ENCODE measurements at regions of chr2 and their contacts with region 1.

Region 1: DNA sequence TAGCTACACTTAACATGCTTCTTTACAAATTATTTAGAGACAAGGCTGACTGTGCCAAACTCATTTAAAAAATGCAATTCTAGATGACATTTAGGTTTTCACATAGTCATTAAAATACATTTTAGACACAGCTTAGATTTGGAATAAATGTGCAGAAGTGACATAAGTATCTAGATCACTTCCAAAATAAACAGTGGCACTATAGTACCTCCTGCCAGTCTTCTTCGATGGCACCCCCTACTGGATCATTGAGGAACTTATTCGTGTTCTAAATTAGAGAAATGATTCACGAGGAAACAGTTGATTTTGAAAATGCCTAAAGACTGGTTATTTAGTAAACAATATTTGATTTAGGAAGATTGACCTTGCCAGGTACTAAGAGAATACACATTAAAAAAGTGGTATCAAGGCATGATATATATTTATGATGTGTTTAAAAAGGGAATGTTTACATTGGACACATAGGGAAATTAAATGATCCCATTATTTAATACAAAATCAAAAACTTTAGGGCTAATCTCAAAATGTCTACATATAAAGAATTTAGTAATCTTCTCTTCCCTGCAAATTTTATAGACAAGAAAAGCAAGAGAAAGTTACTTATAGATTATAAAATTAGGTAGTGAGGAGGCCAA is 323.9 kb downstream of the XIRP2 start:
- DNase-seq: peak; percentile 51
- H3K4me3 ChIP-seq: no peak overlapping the region; a peak in 1 of 4 replicates
- H3K27ac ChIP-seq: no peak overlapping the region
- H3K4me1 ChIP-seq: no peaks in the 10 kb centered on the region
- H3K27me3 ChIP-seq: no peaks in the 10 kb centered on the region
- CTCF ChIP-seq: peak; percentile 90
- EP300 ChIP-seq: no peak
- RAD21 ChIP-seq: peak; percentile 86

Region 2: DNA sequence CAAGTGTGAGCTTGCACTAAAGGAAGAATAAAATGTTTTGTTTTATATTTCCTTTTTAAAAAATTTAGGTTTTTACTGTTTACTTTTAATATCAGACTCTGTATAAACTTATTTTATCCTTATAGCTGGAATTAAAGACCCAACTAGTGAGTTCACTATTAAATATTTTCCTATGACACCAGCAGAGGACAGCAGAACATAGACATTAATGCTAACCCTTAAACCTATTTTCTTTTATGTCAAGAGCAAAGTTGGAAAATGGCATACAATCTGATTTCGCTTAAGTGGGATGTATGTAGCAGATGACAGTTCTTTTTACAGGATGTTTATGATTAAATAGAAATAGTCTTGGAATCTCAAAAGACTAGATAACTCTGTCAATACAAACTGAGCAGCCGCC is 512.1 kb before region 1 on chr2:
- CTCF ChIA-PET with region 1: interaction called, 22 read pairs
- POLR2A ChIA-PET with region 1: no interaction called
- DNase-seq: peak; percentile 11
- H3K4me3 ChIP-seq: no peak overlapping the region
- H3K27ac ChIP-seq: no peak overlapping the region
- H3K4me1 ChIP-seq: no peaks in the 10 kb centered on the region
- H3K27me3 ChIP-seq: no peaks in the 10 kb centered on the region
- CTCF ChIP-seq: peak; percentile 55
- EP300 ChIP-seq: no peak
- RAD21 ChIP-seq: peak; percentile 79

Region 3: GRCh38 chr2:166900700-166901099 is 311.4 kb before region 1 on chr2:
- CTCF ChIA-PET with region 1: no interaction called
- POLR2A ChIA-PET with region 1: no interaction called
- DNase-seq: no peak
- H3K4me3 ChIP-seq: no peak overlapping the region
- H3K27ac ChIP-seq: no peak overlapping the region
- H3K4me1 ChIP-seq: no peaks in the 10 kb centered on the region
- H3K27me3 ChIP-seq: no peaks in the 10 kb centered on the region
- CTCF ChIP-seq: peak; percentile 23
- EP300 ChIP-seq: no peak
- RAD21 ChIP-seq: no peak

Region 4: GRCh38 chr2:167196461-167197252 is 15.5 kb before region 1 on chr2:
- CTCF ChIA-PET with region 1: interaction called, 24 read pairs
- POLR2A ChIA-PET with region 1: no interaction called
- DNase-seq: peak; percentile 55
- H3K4me3 ChIP-seq: no peak overlapping the region
- H3K27ac ChIP-seq: peak overlapping the region in 1 of 2 experiments; percentile 25; a peak in 1 of 4 replicates
- H3K4me1 ChIP-seq: peaks cover 8% of the 10 kb centered on the region in 2 experiments; a peak in 2 of 4 replicates
- H3K27me3 ChIP-seq: no peaks in the 10 kb centered on the region
- CTCF ChIP-seq: no peak
- EP300 ChIP-seq: no peak
- RAD21 ChIP-seq: no peak

Region 5: DNA sequence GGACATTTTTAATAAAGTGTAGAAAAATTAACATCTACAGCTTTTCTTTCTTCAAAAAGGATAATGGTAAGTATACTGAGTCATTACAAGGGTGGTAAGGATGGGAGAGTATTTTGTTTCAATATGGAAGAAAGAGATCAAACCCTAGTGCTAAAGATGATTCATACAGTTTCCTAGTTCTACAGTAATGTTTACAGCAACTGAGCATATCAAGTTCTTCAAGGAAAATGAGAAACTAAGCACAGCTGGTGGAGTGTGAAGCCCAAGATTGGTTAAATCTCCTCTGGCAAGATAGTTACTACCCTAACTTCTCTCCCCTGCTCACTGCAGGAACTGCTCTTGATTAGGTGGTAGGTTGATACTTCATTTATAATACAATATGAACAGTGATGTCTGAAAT is 143.7 kb after region 1 on chr2:
- CTCF ChIA-PET with region 1: no interaction called
- POLR2A ChIA-PET with region 1: no interaction called
- DNase-seq: no peak
- H3K4me3 ChIP-seq: no peak overlapping the region
- H3K27ac ChIP-seq: no peak overlapping the region
- H3K4me1 ChIP-seq: no peaks in the 10 kb centered on the region
- H3K27me3 ChIP-seq: no peaks in the 10 kb centered on the region
- CTCF ChIP-seq: no peak
- EP300 ChIP-seq: no peak
- RAD21 ChIP-seq: no peak

Region 6: GRCh38 chr2:167509586-167509985 is 297.5 kb after region 1 on chr2:
- CTCF ChIA-PET with region 1: no interaction called
- POLR2A ChIA-PET with region 1: no interaction called
- DNase-seq: no peak
- H3K4me3 ChIP-seq: 0 out of 4 replicates have a peak overlapping the region, but pooled peaks of 1 of the 2 experiments have one; percentile 17
- H3K27ac ChIP-seq: peak overlapping the region; percentile 56 to 76; a peak in 3 of 4 replicates
- H3K4me1 ChIP-seq: peaks cover 0 to 12% of the 10 kb centered on the region in 2 experiments; a peak in 2 of 4 replicates
- H3K27me3 ChIP-seq: no peaks in the 10 kb centered on the region
- CTCF ChIP-seq: no peak
- EP300 ChIP-seq: no peak
- RAD21 ChIP-seq: no peak

Measured in SK-N-SH (cell line).